Activated CD4-positive, alpha-beta memory T cell treated with anti-CD3 and anti-CD28 coated beads for 36 hours (primary cell): ENCODE measurements at regions of chr9 and their contacts with region 1.

Region 1: DNA sequence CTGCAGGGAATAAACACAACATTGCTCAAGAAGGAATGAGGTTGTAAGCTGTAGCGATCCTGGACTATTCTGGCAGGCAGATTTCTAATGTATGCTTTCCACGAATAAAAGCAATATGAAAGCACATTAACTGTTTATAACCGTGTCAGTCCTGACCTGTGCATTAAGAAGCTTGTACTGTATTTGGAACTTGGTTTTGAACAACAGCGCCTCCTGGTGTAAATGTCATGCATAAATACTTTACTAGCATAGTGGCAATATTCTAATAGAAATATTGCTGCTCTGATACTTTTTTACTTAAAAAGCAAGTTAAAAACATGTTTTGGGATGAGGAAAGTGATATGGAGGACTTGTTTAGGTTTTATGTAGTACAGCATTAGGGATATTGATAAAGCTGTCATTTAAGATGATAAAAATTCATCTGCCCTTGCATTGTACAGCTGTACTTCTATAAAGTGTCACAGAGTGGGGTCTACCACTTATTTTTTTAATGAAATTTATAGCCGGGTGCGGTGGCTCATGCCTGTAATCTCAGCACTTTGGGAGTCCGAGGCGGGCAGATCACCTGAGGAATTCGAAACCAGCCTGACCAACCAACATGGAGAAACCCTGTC is 70.7 kb upstream of the GNE start:
- DNase-seq: peak; percentile 17
- H3K4me3 Mint-ChIP-seq: no peak overlapping the region
- H3K27ac Mint-ChIP-seq: no peak overlapping the region
- H3K4me1 Mint-ChIP-seq: peaks cover 5% of the 10 kb centered on the region
- H3K27me3 Mint-ChIP-seq: no peaks in the 10 kb centered on the region

Region 2: GRCh38 chr9:35954942-35955546 is 373.9 kb before region 1 on chr9:
- CTCF ChIA-PET with region 1: interaction called, 9 read pairs
- POLR2A ChIA-PET with region 1: no interaction called
- intact Hi-C with region 1: loop called (anchors 10 kb)
- DNase-seq: peak; percentile 59
- H3K4me3 Mint-ChIP-seq: no peak overlapping the region
- H3K27ac Mint-ChIP-seq: no peak overlapping the region
- H3K4me1 Mint-ChIP-seq: peaks cover 6% of the 10 kb centered on the region
- H3K27me3 Mint-ChIP-seq: peaks cover 2% of the 10 kb centered on the region

Region 3: DNA sequence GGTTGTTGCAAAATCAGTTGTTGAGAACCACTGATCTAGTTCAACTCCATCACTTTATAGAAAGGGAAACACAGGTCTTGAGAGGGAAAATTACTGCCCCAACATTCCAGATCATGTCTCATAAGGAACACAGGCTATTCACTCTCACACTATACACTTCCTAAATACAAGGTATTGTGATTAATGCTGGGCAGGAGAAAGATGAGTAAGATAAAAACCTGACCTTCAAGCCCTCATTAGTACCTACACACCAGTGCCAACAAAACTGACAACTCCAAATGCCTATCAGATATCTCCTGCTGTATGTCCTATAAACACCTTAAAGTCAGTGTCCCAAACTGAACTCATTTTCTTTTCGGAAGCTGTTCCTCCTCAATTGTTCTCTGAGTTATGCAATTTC is 78.8 kb before region 1 on chr9:
- CTCF ChIA-PET with region 1: interaction called, 46 read pairs
- POLR2A ChIA-PET with region 1: interaction called, 3 read pairs
- intact Hi-C with region 1: loop called (anchors 1 kb)
- DNase-seq: no peak
- H3K4me3 Mint-ChIP-seq: no peak overlapping the region
- H3K27ac Mint-ChIP-seq: no peak overlapping the region
- H3K4me1 Mint-ChIP-seq: peaks cover 17% of the 10 kb centered on the region
- H3K27me3 Mint-ChIP-seq: no peaks in the 10 kb centered on the region

Region 4: GRCh38 chr9:36258208-36258988 is 70.5 kb before region 1 on chr9 and contains the start of gene GNE:
- CTCF ChIA-PET with region 1: interaction called, 12 read pairs
- POLR2A ChIA-PET with region 1: interaction called, 3 read pairs
- intact Hi-C with region 1: no loop called
- DNase-seq: peak; percentile 98
- H3K4me3 Mint-ChIP-seq: peak within 1 kb of the TSS; percentile 96
- H3K27ac Mint-ChIP-seq: peak within 1 kb of the TSS; percentile 80
- H3K4me1 Mint-ChIP-seq: peaks cover 14% of the 10 kb centered on the region
- H3K27me3 Mint-ChIP-seq: no peaks in the 10 kb centered on the region
- total RNA-seq, gene GNE: 19.2 to 20.5 TPM

Region 5: DNA sequence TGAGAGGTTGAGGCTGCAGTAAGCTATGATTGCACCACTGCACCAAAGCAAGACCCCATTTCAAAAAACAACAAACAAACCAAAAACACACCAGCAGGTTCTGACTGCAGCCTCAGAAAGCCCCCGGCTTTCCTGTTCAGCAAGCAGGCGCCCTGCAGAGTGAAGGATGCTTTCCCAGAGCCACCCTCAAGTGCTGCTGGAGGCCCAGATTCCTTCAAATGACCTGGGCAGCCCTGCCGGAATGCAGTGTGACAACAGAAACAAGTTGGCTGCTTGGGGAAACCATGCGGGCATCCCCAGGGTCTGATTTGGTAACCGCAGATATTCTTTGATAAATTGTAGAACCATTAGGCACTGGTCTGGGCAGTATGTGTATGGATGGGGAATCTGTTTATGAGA is 35.0 kb before region 1 on chr9:
- CTCF ChIA-PET with region 1: no interaction called
- POLR2A ChIA-PET with region 1: no interaction called
- intact Hi-C with region 1: no loop called
- DNase-seq: no peak
- H3K4me3 Mint-ChIP-seq: no peak overlapping the region
- H3K27ac Mint-ChIP-seq: no peak overlapping the region
- H3K4me1 Mint-ChIP-seq: no peaks in the 10 kb centered on the region
- H3K27me3 Mint-ChIP-seq: no peaks in the 10 kb centered on the region

Region 6: GRCh38 chr9:36306471-36307306 is 22.2 kb before region 1 on chr9:
- CTCF ChIA-PET with region 1: interaction called, 11 read pairs
- POLR2A ChIA-PET with region 1: interaction called, 3 read pairs
- intact Hi-C with region 1: no loop called
- DNase-seq: peak; percentile 14
- H3K4me3 Mint-ChIP-seq: no peak overlapping the region
- H3K27ac Mint-ChIP-seq: no peak overlapping the region
- H3K4me1 Mint-ChIP-seq: peaks cover 8% of the 10 kb centered on the region
- H3K27me3 Mint-ChIP-seq: no peaks in the 10 kb centered on the region